ENCODE measurements at regions of chr2 and their contacts with region 1.

Region 1: GRCh38 chr2:152025678-152026287 is 73.1 kb downstream of the CACNB4 start:
- DNase-seq: peak; percentile 71
- ATAC-seq: peak; percentile 93
- H3K4me3 Mint-ChIP-seq: peak overlapping the region; percentile 85
- H3K27ac Mint-ChIP-seq: no peak overlapping the region
- H3K4me1 Mint-ChIP-seq: no peaks in the 10 kb centered on the region
- H3K27me3 Mint-ChIP-seq: peaks cover 5% of the 10 kb centered on the region
- CTCF ChIP-seq: peak; percentile 99

Region 2: GRCh38 chr2:151627361-151627760 is 398.4 kb before region 1 on chr2:
- CTCF ChIA-PET with region 1: no interaction called
- POLR2A ChIA-PET with region 1: no interaction called
- intact Hi-C with region 1: no loop called
- DNase-seq: no peak
- ATAC-seq: no peak
- H3K4me3 Mint-ChIP-seq: no peak overlapping the region
- H3K27ac Mint-ChIP-seq: no peak overlapping the region
- H3K4me1 Mint-ChIP-seq: no peaks in the 10 kb centered on the region
- H3K27me3 Mint-ChIP-seq: no peaks in the 10 kb centered on the region
- CTCF ChIP-seq: no peak

Region 3: GRCh38 chr2:151638191-151638933 is 387.4 kb before region 1 on chr2:
- CTCF ChIA-PET with region 1: no interaction called
- POLR2A ChIA-PET with region 1: no interaction called
- intact Hi-C with region 1: no loop called
- DNase-seq: no peak
- ATAC-seq: peak; percentile 25
- H3K4me3 Mint-ChIP-seq: peak overlapping the region; percentile 56
- H3K27ac Mint-ChIP-seq: peak overlapping the region; percentile 84
- H3K4me1 Mint-ChIP-seq: peaks cover 32% of the 10 kb centered on the region
- H3K27me3 Mint-ChIP-seq: no peaks in the 10 kb centered on the region
- CTCF ChIP-seq: no peak

Region 4: DNA sequence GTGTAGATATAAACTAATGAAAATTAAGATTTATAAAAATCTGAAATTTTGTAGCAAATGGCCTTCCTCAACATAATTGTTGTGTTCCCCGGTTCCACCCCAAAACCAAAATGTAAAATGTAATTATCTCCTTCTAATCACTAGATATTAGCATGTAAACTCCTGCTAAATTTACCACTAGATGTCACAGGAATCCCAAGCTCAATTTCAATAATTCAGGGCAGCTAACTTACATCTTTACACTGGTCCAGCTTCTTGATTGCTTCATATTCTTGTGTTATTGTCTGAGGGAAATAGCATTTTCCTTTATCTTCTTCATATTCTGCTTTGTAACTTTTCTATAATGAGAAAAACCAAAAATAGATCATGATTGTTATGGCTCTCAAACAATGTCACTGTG is 334.2 kb before region 1 on chr2:
- CTCF ChIA-PET with region 1: interaction called, 12 read pairs
- POLR2A ChIA-PET with region 1: no interaction called
- intact Hi-C with region 1: loop called (anchors 1 kb)
- DNase-seq: no peak
- ATAC-seq: no peak
- H3K4me3 Mint-ChIP-seq: no peak overlapping the region
- H3K27ac Mint-ChIP-seq: no peak overlapping the region
- H3K4me1 Mint-ChIP-seq: no peaks in the 10 kb centered on the region
- H3K27me3 Mint-ChIP-seq: no peaks in the 10 kb centered on the region
- CTCF ChIP-seq: no peak

Region 5: GRCh38 chr2:151999053-151999452 is 26.7 kb before region 1 on chr2:
- CTCF ChIA-PET with region 1: interaction called, 17 read pairs
- POLR2A ChIA-PET with region 1: no interaction called
- intact Hi-C with region 1: loop called (anchors 1 kb)
- DNase-seq: peak; percentile 18
- ATAC-seq: peak; percentile 58
- H3K4me3 Mint-ChIP-seq: no peak overlapping the region
- H3K27ac Mint-ChIP-seq: no peak overlapping the region
- H3K4me1 Mint-ChIP-seq: peaks cover under 1% of the 10 kb centered on the region
- H3K27me3 Mint-ChIP-seq: no peaks in the 10 kb centered on the region
- CTCF ChIP-seq: peak; percentile 52

Region 6: GRCh38 chr2:152036611-152037469 is 11.1 kb after region 1 on chr2:
- CTCF ChIA-PET with region 1: interaction called, 10 read pairs
- POLR2A ChIA-PET with region 1: no interaction called
- intact Hi-C with region 1: no loop called
- DNase-seq: peak; percentile 19
- ATAC-seq: peak; percentile 50
- H3K4me3 Mint-ChIP-seq: no peak overlapping the region
- H3K27ac Mint-ChIP-seq: no peak overlapping the region
- H3K4me1 Mint-ChIP-seq: no peaks in the 10 kb centered on the region
- H3K27me3 Mint-ChIP-seq: no peaks in the 10 kb centered on the region
- CTCF ChIP-seq: peak; percentile 52

Region 7: DNA sequence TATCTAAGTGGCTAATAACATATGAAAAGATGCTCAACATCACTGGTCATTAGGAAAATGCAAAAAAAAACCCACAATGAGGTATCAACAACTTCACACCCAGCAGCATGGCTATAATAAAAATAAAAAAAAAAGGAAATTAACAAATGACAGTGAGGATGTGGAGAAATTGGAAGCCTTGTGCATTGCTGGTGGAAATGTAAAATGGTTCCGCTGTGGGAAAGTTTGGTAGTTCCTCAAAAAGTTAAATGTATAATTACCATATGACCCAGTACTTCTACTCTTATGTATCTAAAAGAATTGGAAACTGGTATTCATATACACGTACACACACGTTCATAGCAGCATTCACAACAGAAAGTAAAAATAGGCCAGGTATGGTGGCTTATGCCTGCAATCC is 88.6 kb after region 1 on chr2:
- CTCF ChIA-PET with region 1: no interaction called
- POLR2A ChIA-PET with region 1: no interaction called
- intact Hi-C with region 1: no loop called
- DNase-seq: no peak
- ATAC-seq: no peak
- H3K4me3 Mint-ChIP-seq: no peak overlapping the region
- H3K27ac Mint-ChIP-seq: no peak overlapping the region
- H3K4me1 Mint-ChIP-seq: no peaks in the 10 kb centered on the region
- H3K27me3 Mint-ChIP-seq: no peaks in the 10 kb centered on the region
- CTCF ChIP-seq: no peak

Region 8: GRCh38 chr2:152227969-152228592 is 202.3 kb after region 1 on chr2:
- CTCF ChIA-PET with region 1: no interaction called
- POLR2A ChIA-PET with region 1: no interaction called
- intact Hi-C with region 1: no loop called
- DNase-seq: no peak
- ATAC-seq: no peak
- H3K4me3 Mint-ChIP-seq: no peak overlapping the region
- H3K27ac Mint-ChIP-seq: no peak overlapping the region
- H3K4me1 Mint-ChIP-seq: no peaks in the 10 kb centered on the region
- H3K27me3 Mint-ChIP-seq: peaks cover 4% of the 10 kb centered on the region
- CTCF ChIP-seq: no peak